Caco-2 (cell line): ENCODE measurements at regions of chr3 and their contacts with region 1.

Region 1: GRCh38 chr3:56251343-56251945 is 216.8 kb downstream of the ERC2 start:
- DNase-seq: peak in 1 of 2 experiments; percentile 62
- H3K4me3 ChIP-seq: no peak overlapping the region
- H3K4me3 Mint-ChIP-seq: no peak overlapping the region
- H3K27ac Mint-ChIP-seq: no peak overlapping the region
- H3K4me1 ChIP-seq: peaks cover 18% of the 10 kb centered on the region; the same call in 1 of the 2 replicates
- H3K4me1 Mint-ChIP-seq: peaks cover 9% of the 10 kb centered on the region
- H3K27me3 ChIP-seq: no peaks in the 10 kb centered on the region
- H3K27me3 Mint-ChIP-seq: no peaks in the 10 kb centered on the region
- CTCF ChIP-seq: peak; percentile 63 to 76

Region 2: GRCh38 chr3:54853573-54854404 is 1397.7 kb before region 1 on chr3:
- CTCF ChIA-PET with region 1: no interaction called
- POLR2A ChIA-PET with region 1: no interaction called
- intact Hi-C with region 1: loop called (anchors 10 kb)
- DNase-seq: peak; percentile 64 to 75
- H3K4me3 ChIP-seq: no peak overlapping the region
- H3K4me3 Mint-ChIP-seq: no peak overlapping the region
- H3K27ac Mint-ChIP-seq: no peak overlapping the region
- H3K4me1 ChIP-seq: no peaks in the 10 kb centered on the region
- H3K4me1 Mint-ChIP-seq: no peaks in the 10 kb centered on the region
- H3K27me3 ChIP-seq: no peaks in the 10 kb centered on the region; the same call in 1 of the 2 replicates
- H3K27me3 Mint-ChIP-seq: peaks cover 14% of the 10 kb centered on the region
- CTCF ChIP-seq: peak; percentile 82 to 88

Region 3: DNA sequence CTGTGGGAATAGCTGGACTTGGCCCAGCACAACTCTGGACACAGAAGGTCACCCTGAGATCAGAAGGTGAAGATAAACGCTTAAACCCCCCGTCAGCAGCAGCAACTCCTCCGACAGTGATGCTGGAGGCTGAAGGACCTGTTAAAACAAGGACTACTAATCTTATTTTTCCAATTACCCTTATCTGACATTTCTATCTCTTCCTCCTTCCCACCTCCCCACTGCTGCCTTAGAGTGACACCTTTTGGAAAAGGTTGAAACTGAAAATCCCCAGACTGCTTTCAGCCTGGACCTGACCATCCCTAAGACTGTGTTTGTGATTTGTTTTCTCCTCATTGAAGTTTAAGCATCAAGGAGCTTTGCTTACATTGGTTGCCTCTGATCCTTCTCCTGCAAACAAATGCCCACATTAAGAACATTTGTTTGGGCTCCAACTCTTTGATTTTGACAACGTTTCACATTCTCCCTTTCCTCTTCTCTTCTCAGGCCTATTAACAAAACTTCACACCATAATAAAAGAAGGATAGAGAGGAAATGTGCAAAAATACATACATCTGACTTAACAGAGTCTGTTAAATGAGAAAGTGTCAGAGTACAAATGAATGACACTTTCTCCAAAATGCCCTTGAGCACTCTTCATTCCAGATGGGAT is 353.7 kb before region 1 on chr3:
- CTCF ChIA-PET with region 1: no interaction called
- POLR2A ChIA-PET with region 1: no interaction called
- intact Hi-C with region 1: loop called (anchors 5 kb)
- DNase-seq: peak in 1 of 2 experiments; percentile 32
- H3K4me3 ChIP-seq: no peak overlapping the region
- H3K4me3 Mint-ChIP-seq: no peak overlapping the region
- H3K27ac Mint-ChIP-seq: no peak overlapping the region
- H3K4me1 ChIP-seq: no peaks in the 10 kb centered on the region
- H3K4me1 Mint-ChIP-seq: no peaks in the 10 kb centered on the region
- H3K27me3 ChIP-seq: no peaks in the 10 kb centered on the region
- H3K27me3 Mint-ChIP-seq: peaks cover 3% of the 10 kb centered on the region
- CTCF ChIP-seq: peak; percentile 33 to 40

Region 4: DNA sequence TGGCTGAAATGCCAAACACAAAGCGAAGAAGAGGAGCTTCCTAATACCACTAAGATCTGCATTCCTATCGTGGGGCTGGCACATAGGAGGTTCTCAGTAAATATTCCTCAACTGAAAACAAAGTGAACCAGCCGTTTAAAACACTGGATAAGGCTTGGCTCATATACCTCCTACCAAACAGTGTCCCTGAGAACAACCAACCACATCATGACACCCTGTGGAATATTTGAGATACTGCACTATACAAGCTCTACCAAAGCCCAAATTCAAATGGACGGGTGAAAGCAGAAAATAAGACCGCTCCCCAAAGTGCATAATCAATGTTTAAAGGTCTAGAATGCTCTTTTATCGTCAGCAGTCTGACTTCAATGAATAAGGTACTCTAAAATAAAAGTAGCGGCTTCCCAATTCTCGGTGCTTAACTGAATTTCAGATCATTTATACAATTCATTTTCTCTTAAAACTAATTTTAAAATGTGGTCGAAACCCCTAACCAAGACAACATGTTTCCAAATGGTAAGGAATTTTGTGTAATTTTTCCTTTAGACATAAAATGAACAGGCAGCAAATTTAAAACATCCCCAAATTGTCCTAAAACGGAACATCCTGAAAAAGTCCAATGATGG is 209.0 kb before region 1 on chr3:
- CTCF ChIA-PET with region 1: interaction called, 4 read pairs
- POLR2A ChIA-PET with region 1: no interaction called
- intact Hi-C with region 1: loop called (anchors 1 kb)
- DNase-seq: peak in 1 of 2 experiments; percentile 47
- H3K4me3 ChIP-seq: no peak overlapping the region
- H3K4me3 Mint-ChIP-seq: no peak overlapping the region
- H3K27ac Mint-ChIP-seq: no peak overlapping the region
- H3K4me1 ChIP-seq: peaks cover 36% of the 10 kb centered on the region
- H3K4me1 Mint-ChIP-seq: peaks cover 5% of the 10 kb centered on the region
- H3K27me3 ChIP-seq: no peaks in the 10 kb centered on the region
- H3K27me3 Mint-ChIP-seq: no peaks in the 10 kb centered on the region
- CTCF ChIP-seq: peak; percentile 55 to 56

Region 5: DNA sequence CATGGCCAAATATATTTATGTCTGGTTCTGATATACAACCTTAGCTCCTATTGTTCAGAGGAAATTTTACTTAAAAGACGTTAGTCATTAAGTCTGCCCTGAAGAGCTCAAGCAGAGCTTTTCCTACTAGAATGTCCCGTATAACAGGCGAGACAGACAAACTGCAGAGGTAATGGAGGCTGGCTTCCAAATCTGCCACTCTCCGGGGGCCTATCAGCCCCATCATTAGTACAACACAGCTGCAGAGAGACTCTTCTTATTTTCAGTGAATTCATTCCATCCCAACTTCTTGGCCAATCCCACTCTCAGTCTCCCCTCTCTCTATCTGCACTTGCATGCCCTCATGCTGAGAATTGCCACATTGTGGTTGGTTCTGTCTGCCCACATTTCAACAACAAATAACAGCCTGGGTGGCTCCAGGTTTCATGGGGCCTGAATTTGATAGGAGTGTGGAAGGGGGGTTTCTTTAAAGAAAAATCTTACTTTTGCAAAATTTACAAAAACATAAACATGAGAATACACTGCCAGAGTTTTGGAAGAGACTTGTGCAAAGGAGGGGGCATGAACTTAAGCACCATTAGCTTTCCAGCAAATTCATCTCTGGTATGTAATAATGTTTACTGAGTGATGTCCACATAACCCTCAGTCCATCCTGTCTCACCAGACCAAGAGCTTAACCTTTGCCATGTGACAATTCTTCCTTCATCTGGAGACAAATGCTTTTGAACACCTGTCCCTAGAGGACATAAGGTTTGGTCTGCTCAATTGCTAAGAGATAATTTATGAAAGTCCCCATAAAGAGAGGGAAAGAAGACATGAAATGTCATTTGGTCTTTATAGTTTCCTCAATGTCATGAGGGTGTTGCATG is 195.7 kb before region 1 on chr3:
- CTCF ChIA-PET with region 1: interaction called, 4 read pairs
- POLR2A ChIA-PET with region 1: no interaction called
- intact Hi-C with region 1: loop called (anchors 1 kb)
- DNase-seq: peak; percentile 48 to 65
- H3K4me3 ChIP-seq: no peak overlapping the region
- H3K4me3 Mint-ChIP-seq: no peak overlapping the region
- H3K27ac Mint-ChIP-seq: peak overlapping the region; percentile 72
- H3K4me1 ChIP-seq: peaks cover 72% of the 10 kb centered on the region
- H3K4me1 Mint-ChIP-seq: peaks cover 60% of the 10 kb centered on the region
- H3K27me3 ChIP-seq: no peaks in the 10 kb centered on the region
- H3K27me3 Mint-ChIP-seq: no peaks in the 10 kb centered on the region
- CTCF ChIP-seq: no peak

Region 6: GRCh38 chr3:56303487-56303886 is 52.0 kb after region 1 on chr3:
- CTCF ChIA-PET with region 1: no interaction called
- POLR2A ChIA-PET with region 1: no interaction called
- intact Hi-C with region 1: loop called (anchors 1 kb)
- DNase-seq: peak; percentile 37 to 46
- H3K4me3 ChIP-seq: no peak overlapping the region
- H3K4me3 Mint-ChIP-seq: no peak overlapping the region
- H3K27ac Mint-ChIP-seq: no peak overlapping the region
- H3K4me1 ChIP-seq: 0 out of 2 replicates have a peak, but pooled peaks cover 4% of the 10 kb centered on the region
- H3K4me1 Mint-ChIP-seq: no peaks in the 10 kb centered on the region
- H3K27me3 ChIP-seq: no peaks in the 10 kb centered on the region; the same call in 1 of the 2 replicates
- H3K27me3 Mint-ChIP-seq: peaks cover 5% of the 10 kb centered on the region
- CTCF ChIP-seq: peak; percentile 46 to 69

Region 7: GRCh38 chr3:56339671-56340070 is 88.2 kb after region 1 on chr3:
- CTCF ChIA-PET with region 1: no interaction called
- POLR2A ChIA-PET with region 1: no interaction called
- intact Hi-C with region 1: no loop called
- DNase-seq: no peak
- H3K4me3 ChIP-seq: no peak overlapping the region
- H3K4me3 Mint-ChIP-seq: no peak overlapping the region
- H3K27ac Mint-ChIP-seq: no peak overlapping the region
- H3K4me1 ChIP-seq: no peaks in the 10 kb centered on the region
- H3K4me1 Mint-ChIP-seq: no peaks in the 10 kb centered on the region
- H3K27me3 ChIP-seq: no peaks in the 10 kb centered on the region
- H3K27me3 Mint-ChIP-seq: no peaks in the 10 kb centered on the region
- CTCF ChIP-seq: no peak